ENCODE measurements at regions of chr1 and their contacts with region 1.

Region 1: GRCh38 chr1:209855623-209856022 is 27.9 kb downstream of the UTP25 start:
- DNase-seq: no peak
- ATAC-seq: no peak

Region 2: GRCh38 chr1:209769171-209769904 is 86.3 kb before region 1 on chr1:
- intact Hi-C with region 1: no loop called
- DNase-seq: peak; percentile 78
- ATAC-seq: peak; percentile 91

Region 3: GRCh38 chr1:209875515-209875914 is 19.9 kb after region 1 on chr1:
- intact Hi-C with region 1: no loop called
- DNase-seq: no peak
- ATAC-seq: peak; percentile 85

Region 4: GRCh38 chr1:209900734-209901133 is 45.1 kb after region 1 on chr1:
- intact Hi-C with region 1: no loop called
- DNase-seq: no peak
- ATAC-seq: no peak

Region 5: GRCh38 chr1:209983953-209984352 is 128.3 kb after region 1 on chr1:
- intact Hi-C with region 1: loop called (anchors 1 kb)
- DNase-seq: no peak
- ATAC-seq: no peak

Region 6: DNA sequence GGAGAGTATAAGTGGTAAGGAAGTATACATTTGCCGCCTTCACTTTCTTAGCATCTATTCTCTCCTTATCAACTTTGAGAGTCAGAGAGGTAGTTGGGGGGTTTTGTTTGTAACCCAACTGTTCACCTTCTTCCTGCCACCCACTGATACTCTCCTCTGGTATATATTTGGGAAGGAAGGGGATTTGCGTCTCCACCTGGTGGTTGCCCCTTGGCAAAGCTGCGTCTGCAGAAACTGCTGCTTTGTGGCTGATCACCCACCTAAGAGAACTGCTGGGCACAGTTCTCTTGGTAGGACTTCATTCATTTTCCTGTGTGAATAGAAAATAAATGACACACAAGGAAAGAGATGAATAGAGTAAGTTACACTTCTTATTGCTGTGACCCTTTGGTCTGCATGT is 169.4 kb after region 1 on chr1:
- intact Hi-C with region 1: no loop called
- DNase-seq: no peak
- ATAC-seq: no peak